AG04450 (cell line): ENCODE measurements at regions of chr10 and their contacts with region 1.

Region 1: GRCh38 chr10:90319188-90319914 is 538.5 kb downstream of the HTR7 start:
- DNase-seq: peak; percentile 62
- H3K4me3 ChIP-seq: no peak overlapping the region
- H3K27ac ChIP-seq: no peak overlapping the region
- H3K27me3 ChIP-seq: no peaks in the 10 kb centered on the region
- CTCF ChIP-seq: no peak

Region 2: GRCh38 chr10:90337316-90337715 is 18.0 kb after region 1 on chr10:
- CTCF ChIA-PET with region 1: interaction called, 10 read pairs
- POLR2A ChIA-PET with region 1: no interaction called
- DNase-seq: no peak
- H3K4me3 ChIP-seq: no peak overlapping the region
- H3K27ac ChIP-seq: no peak overlapping the region
- H3K27me3 ChIP-seq: peaks cover 3% of the 10 kb centered on the region
- CTCF ChIP-seq: no peak

Region 3: GRCh38 chr10:90350122-90350521 is 30.8 kb after region 1 on chr10:
- CTCF ChIA-PET with region 1: no interaction called
- POLR2A ChIA-PET with region 1: no interaction called
- DNase-seq: no peak
- H3K4me3 ChIP-seq: no peak overlapping the region
- H3K27ac ChIP-seq: no peak overlapping the region
- H3K27me3 ChIP-seq: peaks cover 2% of the 10 kb centered on the region
- CTCF ChIP-seq: no peak